ENCODE measurements at regions of chr17 and their contacts with region 1.

Region 1: GRCh38 chr17:35726127-35726952 is 5.1 kb upstream of the RASL10B start:
- DNase-seq: peak; percentile 69
- H3K4me3 ChIP-seq: no peak overlapping the region
- H3K27me3 ChIP-seq: no peaks in the 10 kb centered on the region
- CTCF ChIP-seq: no peak

Region 2: GRCh38 chr17:35612924-35613521 is 113.3 kb before region 1 on chr17:
- CTCF ChIA-PET with region 1: interaction called, 15 read pairs
- POLR2A ChIA-PET with region 1: interaction called, 5 read pairs
- DNase-seq: no peak
- H3K4me3 ChIP-seq: no peak overlapping the region
- H3K27me3 ChIP-seq: no peaks in the 10 kb centered on the region
- CTCF ChIP-seq: peak; percentile 74

Region 3: GRCh38 chr17:35774499-35774898 is 48.2 kb after region 1 on chr17:
- CTCF ChIA-PET with region 1: no interaction called
- POLR2A ChIA-PET with region 1: no interaction called
- DNase-seq: no peak
- H3K4me3 ChIP-seq: no peak overlapping the region
- H3K27me3 ChIP-seq: peaks cover 37% of the 10 kb centered on the region
- CTCF ChIP-seq: no peak

Region 4: GRCh38 chr17:35841505-35841904 is 115.2 kb after region 1 on chr17:
- CTCF ChIA-PET with region 1: no interaction called
- POLR2A ChIA-PET with region 1: interaction called, 11 read pairs
- DNase-seq: no peak
- H3K4me3 ChIP-seq: no peak overlapping the region
- H3K27me3 ChIP-seq: no peaks in the 10 kb centered on the region
- CTCF ChIP-seq: no peak

Region 5: GRCh38 chr17:36212966-36213365 is 486.6 kb after region 1 on chr17:
- CTCF ChIA-PET with region 1: no interaction called
- POLR2A ChIA-PET with region 1: no interaction called
- DNase-seq: no peak
- H3K4me3 ChIP-seq: no peak overlapping the region
- H3K27me3 ChIP-seq: no peaks in the 10 kb centered on the region
- CTCF ChIP-seq: no peak

Region 6: DNA sequence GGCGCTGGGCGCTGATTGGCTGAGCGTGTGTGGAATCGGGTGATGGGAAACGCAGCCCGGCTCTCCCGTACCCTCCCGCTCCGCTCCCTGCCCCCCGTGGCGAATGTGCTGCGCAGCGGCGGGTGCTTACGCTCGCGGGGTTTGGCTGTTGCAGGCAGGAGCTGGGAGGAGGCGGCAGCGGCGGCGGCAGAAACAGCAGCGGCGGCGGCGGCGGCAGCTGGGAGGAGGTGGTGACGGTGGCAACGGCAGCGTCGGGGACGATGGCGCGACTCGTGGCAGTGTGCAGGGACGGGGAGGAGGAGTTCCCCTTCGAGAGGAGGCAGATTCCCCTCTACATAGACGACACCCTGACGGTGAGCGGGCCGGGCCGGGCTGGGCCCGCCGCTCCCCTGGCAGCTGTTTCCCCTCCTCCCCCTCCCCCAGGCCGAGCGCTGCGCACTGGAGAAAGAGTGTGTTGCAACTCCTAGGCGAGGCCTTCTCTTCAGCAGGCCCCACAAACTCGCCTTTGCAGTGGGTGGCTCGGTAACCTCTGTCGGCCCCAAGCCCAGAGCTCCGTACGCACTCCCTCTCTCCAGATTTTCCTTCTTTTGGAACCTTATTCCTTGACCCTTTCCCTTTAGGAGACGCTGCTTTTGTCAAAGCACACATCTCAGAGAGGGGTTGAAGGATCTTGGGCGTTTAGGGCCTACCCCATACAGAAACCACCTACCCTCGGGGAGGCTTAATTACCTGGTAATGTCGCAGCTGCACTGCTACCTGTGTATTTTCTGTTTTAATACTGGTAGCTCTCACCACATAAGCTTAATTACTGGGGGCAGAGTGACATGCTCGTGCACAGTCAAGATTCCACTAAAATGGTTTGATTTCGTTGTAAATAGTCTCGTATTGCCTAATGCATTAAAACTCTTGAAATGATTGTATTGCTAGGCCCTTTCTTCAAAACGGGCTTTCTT is 819.4 kb after region 1 on chr17:
- CTCF ChIA-PET with region 1: no interaction called
- POLR2A ChIA-PET with region 1: interaction called, 10 read pairs
- DNase-seq: peak; percentile 66
- H3K4me3 ChIP-seq: peak overlapping the region; percentile 86
- H3K27me3 ChIP-seq: no peaks in the 10 kb centered on the region
- CTCF ChIP-seq: no peak